Stomach (tissue), 19 donors: ENCODE measurements at regions of chr3 and their contacts with region 1.

Region 1: GRCh38 chr3:195271116-195271858 is at the start of gene XXYLT1:
- DNase-seq: peak; percentile 88 to 97
- H3K4me3 ChIP-seq: peak within 1 kb of the TSS; percentile 84 to 92 (median 86)
- H3K27ac ChIP-seq: peak within 1 kb of the TSS; percentile 86 to 94 (median 89)
- H3K4me1 ChIP-seq: peaks cover 18 to 39% (median 25%) of the 10 kb centered on the region in 4 donors
- H3K27me3 ChIP-seq: no peaks in the 10 kb centered on the region
- CTCF ChIP-seq: peak in 6 of 7 experiments; percentile 11 to 91 (median 87)
- EP300 ChIP-seq: no peak
- POLR2A ChIP-seq: no peak
- total RNA-seq, gene XXYLT1: 11.4 to 41.5 (median 13.8) TPM in 4 of 5 donors, not detected in the other

Region 2: DNA sequence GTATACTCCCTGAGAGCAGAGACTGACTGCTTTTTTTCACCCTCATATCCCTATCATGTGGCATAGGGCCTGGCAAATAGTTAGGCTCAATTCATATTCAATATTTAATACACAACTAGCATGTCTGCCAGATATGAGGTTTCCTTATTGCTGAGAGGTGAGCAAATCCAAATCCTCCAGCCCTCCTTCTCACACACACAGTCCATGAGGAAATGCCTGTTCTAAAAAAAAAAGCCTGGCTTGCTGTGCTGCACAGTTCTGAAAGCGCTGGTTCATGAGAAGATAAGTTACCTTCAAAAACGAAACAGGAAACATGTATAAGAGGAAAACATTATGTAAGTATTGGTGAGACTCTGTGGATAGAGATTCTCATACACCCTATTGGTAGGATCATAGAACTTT is 187.0 kb after region 1 on chr3:
- intact Hi-C with region 1: loop called (anchors 10 kb)
- DNase-seq: peak in 1 of 2 donors; percentile 71
- H3K4me3 ChIP-seq: no peak overlapping the region
- H3K27ac ChIP-seq: peak overlapping the region; percentile 31 to 75 (median 54)
- H3K4me1 ChIP-seq: peaks cover 0 to 20% (median 6%) of the 10 kb centered on the region in 4 donors
- H3K27me3 ChIP-seq: no peaks in the 10 kb centered on the region
- CTCF ChIP-seq: no peak
- EP300 ChIP-seq: no peak
- POLR2A ChIP-seq: no peak

Region 3: GRCh38 chr3:195522254-195523023 is 251.2 kb after region 1 on chr3:
- intact Hi-C with region 1: loop called (anchors 5 kb)
- DNase-seq: peak in 1 of 2 donors; percentile 54
- H3K4me3 ChIP-seq: no peak overlapping the region
- H3K27ac ChIP-seq: no peak overlapping the region
- H3K4me1 ChIP-seq: peaks cover 0 to 6% (median 2%) of the 10 kb centered on the region in 4 donors
- H3K27me3 ChIP-seq: no peaks in the 10 kb centered on the region
- CTCF ChIP-seq: peak in 5 of 7 experiments; percentile 51 to 83 (median 72)
- EP300 ChIP-seq: no peak
- POLR2A ChIP-seq: no peak